Cardiac septum (tissue), 1 donor: ENCODE measurements at regions of chr19 and their contacts with region 1.

Region 1: DNA sequence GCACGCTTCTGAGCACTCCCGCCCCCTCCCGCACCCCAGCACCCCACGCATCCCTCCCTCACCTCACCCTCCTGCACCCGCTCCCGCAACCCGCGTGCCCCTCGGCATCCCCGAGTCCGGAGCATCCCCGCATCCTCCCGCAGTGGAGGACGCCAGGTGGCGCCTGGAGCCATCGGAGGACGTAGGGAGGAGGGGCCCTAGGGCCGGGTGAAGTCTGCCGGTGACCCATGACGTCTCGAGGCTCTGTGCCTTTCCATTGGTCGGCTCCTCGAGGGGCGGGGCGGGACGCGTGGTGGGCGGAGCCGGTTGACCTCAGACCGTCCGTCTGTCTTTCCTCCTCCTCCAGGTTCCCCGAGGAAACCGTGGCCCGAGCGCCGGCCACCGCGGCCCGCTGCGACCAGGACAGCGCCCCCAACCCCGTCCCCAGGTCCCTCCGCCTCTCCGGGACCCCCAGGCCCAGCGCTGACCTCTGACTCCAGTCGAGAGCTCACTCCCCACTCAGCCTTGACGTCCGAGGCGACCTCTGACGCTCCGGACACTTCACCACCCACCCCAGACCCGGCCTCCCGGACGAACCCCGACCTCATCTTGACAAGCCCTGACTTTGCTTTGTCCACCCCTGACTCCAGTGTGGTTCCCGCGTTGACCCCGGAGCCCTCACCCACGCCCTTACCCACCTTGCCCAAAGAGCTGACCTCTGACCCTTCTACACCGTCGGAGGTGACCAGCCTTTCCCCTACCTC is 19.9 kb downstream of the SBK2 start:
- DNase-seq: peak; percentile 98

Region 2: DNA sequence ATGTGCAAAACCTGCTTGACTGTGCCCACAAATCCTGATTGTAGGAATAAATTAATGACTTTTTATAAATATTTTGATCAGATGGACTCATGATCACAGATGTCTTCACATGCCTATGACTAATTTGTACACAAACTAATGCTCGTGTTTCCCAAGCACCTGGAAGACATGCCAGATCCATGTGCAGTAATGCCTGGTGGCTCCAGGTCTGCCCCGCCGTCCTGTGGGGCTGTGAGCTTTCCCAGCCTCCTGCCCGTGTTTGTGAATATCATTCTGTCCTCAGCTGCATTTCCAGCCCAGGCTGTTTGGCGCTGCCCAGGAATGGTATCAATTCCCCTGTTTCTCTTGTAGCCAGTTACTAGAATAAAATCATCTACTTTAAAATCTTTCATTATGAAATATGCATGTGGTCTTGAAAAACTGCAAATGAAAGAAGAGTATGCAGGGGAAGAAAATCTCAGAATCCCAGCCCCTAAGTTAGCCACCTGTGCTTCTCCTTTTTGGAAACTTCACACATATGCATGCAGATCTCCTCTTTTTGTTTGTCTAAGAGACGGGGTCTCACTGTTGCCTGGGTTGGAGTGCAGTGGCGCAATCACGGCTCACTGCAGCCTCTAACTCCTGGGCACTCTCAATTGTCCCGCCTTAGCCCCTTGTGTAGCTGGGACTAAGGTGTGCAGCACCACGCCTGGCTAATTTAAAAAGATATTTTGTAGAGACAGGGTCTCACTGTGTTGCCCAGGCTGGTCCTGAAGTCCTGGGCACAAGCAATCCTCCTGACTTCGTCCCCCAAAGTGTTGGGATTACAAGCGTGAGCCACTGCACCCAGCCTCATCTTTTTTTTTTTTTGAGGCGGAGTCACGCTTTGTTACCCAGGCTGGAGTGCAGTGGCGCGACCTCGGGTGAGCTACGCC is 125.1 kb before region 1 on chr19:
- intact Hi-C with region 1: no loop called
- DNase-seq: no peak

Region 3: GRCh38 chr19:55476100-55476775 is 40.8 kb before region 1 on chr19 and contains the start of gene ZNF628:
- intact Hi-C with region 1: no loop called
- DNase-seq: peak; percentile 99
- total RNA-seq, gene ZNF628: 3.4 TPM

Region 4: GRCh38 chr19:55552620-55553019 is 35.6 kb after region 1 on chr19:
- intact Hi-C with region 1: no loop called
- DNase-seq: no peak

Region 5: GRCh38 chr19:55580628-55581144 is 63.6 kb after region 1 on chr19 and contains the start of gene ZNF579:
- intact Hi-C with region 1: loop called (anchors 5 kb)
- DNase-seq: peak; percentile 91
- total RNA-seq, gene ZNF579: 12.2 TPM

Region 6: GRCh38 chr19:55599468-55600279 is 82.6 kb after region 1 on chr19 and contains the start of gene FIZ1:
- intact Hi-C with region 1: loop called (anchors 2 kb)
- DNase-seq: peak; percentile 99
- total RNA-seq, gene FIZ1: 19.4 TPM

Region 7: DNA sequence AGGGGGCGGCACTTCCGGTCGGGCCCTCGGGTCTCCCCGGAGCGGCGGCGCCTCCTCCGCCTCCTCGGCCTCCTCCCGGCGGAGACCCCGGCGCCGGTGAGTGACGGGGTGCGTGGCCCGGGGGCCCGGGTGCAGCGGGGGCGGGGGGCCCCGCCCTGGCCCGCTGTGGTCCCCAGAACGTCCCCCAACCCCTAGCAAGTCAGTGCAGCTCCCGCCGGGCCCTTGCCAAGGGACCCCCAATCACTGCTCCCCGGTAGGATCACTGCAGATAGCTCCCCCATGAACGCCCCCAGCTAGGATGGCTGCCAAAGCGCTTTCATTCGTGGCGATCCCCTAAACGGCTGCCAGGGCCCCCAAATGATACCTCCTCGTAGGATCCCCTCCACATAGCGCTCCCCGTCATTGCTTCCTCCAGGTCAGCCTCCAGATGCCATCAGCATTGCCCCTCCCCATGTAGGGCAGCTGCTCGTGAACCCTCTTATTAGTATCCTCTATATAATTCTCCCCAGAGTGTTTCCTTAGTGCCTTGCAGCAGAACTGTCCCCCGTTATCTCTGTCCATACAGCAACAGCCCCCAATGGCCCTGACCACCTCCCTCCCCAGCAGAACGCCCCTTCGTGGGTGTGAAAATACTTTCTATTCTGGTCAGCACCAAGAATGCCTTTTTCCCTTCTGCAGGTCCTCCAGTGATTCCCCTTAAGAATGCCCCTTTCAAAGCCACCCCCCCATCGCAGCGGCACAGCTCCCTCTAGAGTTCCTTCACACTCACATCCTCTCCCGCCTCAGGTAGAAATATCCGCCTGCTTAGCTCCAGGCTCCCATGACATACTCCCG is 88.8 kb after region 1 on chr19 and contains the start of gene ZNF865:
- intact Hi-C with region 1: loop called (anchors 1 kb)
- DNase-seq: no peak
- total RNA-seq, gene ZNF865: 15.7 TPM

Region 8: DNA sequence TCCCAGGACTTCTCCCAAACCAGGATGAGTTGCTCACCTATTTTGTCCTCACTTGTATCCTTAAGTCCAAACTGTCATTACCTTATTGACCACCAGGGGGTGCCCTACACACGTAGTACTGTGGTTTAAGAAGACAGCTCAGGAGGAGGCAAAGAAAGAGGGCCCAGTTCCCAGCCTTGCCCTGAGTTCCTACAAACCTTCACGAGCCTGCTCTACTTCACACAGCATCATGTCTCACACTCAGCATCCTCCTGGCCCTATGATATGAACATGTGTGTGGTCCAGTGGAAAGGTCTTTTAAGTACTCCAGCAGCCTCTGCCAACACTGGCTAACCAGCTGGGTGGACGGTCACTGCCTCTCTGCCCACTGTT is 115.4 kb after region 1 on chr19:
- intact Hi-C with region 1: loop called (anchors 1 kb)
- DNase-seq: no peak

Region 9: DNA sequence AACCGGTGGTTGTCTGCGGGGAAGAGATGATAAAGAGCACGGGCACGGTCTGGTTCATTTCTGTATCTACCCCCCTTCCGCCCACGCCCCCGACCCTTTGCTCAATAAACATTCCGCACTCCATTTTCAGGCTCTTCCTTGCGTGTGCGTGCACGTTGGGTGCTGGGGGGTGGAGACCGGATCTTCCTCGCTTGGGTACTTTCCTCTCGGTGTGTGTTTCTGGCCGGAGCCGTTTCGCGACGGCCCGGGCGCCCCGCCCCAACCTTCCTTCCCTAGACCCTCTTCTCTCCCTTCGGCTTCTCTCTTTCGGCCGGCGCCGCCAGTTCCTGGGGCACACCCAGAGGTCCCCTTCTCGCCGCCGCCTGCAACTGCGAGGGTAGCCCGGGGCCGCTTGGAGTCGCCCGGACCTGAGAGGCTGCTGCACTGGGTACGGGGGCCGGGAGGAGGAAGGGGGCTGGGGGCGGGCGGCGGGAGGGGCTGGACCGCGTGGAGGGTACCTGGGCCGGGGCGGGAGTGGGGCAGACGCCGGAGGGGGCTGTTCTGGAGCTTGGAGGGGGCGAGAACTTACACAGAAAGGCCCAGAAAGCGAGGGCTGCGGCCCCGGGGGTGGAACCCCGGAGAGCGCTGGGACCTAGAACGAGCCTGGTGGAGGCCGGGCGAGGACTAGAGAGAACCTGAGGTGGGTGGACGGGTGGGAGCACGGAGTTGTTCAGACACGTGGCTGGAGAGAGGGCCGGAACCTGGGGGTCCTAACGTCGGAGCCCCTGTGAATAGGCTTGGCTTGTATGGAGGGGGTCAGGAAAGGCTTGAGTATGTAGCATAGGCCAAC is 126.5 kb after region 1 on chr19 and contains the start of gene ZNF581:
- intact Hi-C with region 1: no loop called
- DNase-seq: peak; percentile 85
- total RNA-seq, gene ZNF581: 6.5 TPM